ENCODE measurements at regions of chr12 and their contacts with region 1.

Region 1: GRCh38 chr12:53492830-53493611 is 6.2 kb downstream of the MAP3K12 start:
- DNase-seq: peak; percentile 66 to 93 (median 85)
- ATAC-seq: peak; percentile 93
- H3K4me3 ChIP-seq: peak overlapping the region; percentile 61 to 66
- H3K4me3 Mint-ChIP-seq: peak overlapping the region; percentile 89
- H3K27ac ChIP-seq: peak overlapping the region; percentile 67 to 85
- H3K27ac Mint-ChIP-seq: peak overlapping the region; percentile 91
- H3K4me1 ChIP-seq: peaks cover 20% of the 10 kb centered on the region
- H3K4me1 Mint-ChIP-seq: peaks cover 38% of the 10 kb centered on the region
- H3K27me3 ChIP-seq: no peaks in the 10 kb centered on the region
- H3K27me3 Mint-ChIP-seq: no peaks in the 10 kb centered on the region
- CTCF ChIP-seq: no peak

Region 2: GRCh38 chr12:53476769-53477209 is 16.2 kb before region 1 on chr12:
- CTCF ChIA-PET with region 1: interaction called, 11 read pairs
- POLR2A ChIA-PET with region 1: interaction called, 7 read pairs
- intact Hi-C with region 1: loop called in 1 of 2 experiments (anchors 2 kb)
- DNase-seq: peak in 2 of 9 experiments; percentile 19 to 37
- ATAC-seq: peak; percentile 37
- H3K4me3 ChIP-seq: no peak overlapping the region
- H3K4me3 Mint-ChIP-seq: no peak overlapping the region
- H3K27ac ChIP-seq: no peak overlapping the region
- H3K27ac Mint-ChIP-seq: no peak overlapping the region
- H3K4me1 ChIP-seq: peaks cover 25% of the 10 kb centered on the region
- H3K4me1 Mint-ChIP-seq: peaks cover 52% of the 10 kb centered on the region
- H3K27me3 ChIP-seq: no peaks in the 10 kb centered on the region
- H3K27me3 Mint-ChIP-seq: no peaks in the 10 kb centered on the region
- CTCF ChIP-seq: no peak

Region 3: GRCh38 chr12:53481957-53482586 is 10.9 kb before region 1 on chr12:
- CTCF ChIA-PET with region 1: interaction called, 11 read pairs
- POLR2A ChIA-PET with region 1: interaction called, 7 read pairs
- intact Hi-C with region 1: no loop called
- DNase-seq: peak in 3 of 9 experiments; percentile 32 to 47 (median 34)
- ATAC-seq: peak; percentile 76
- H3K4me3 ChIP-seq: no peak overlapping the region
- H3K4me3 Mint-ChIP-seq: no peak overlapping the region
- H3K27ac ChIP-seq: no peak overlapping the region
- H3K27ac Mint-ChIP-seq: peak overlapping the region; percentile 64
- H3K4me1 ChIP-seq: no peaks in the 10 kb centered on the region
- H3K4me1 Mint-ChIP-seq: peaks cover 11% of the 10 kb centered on the region
- H3K27me3 ChIP-seq: no peaks in the 10 kb centered on the region
- H3K27me3 Mint-ChIP-seq: no peaks in the 10 kb centered on the region
- CTCF ChIP-seq: peak; percentile 34

Measured in CD8-positive, alpha-beta T cell (primary cell).